ENCODE measurements at regions of chr1 and their contacts with region 1.

Region 1: GRCh38 chr1:93846211-93846991 is 32.6 kb downstream of the DNTTIP2 start:
- DNase-seq: peak; percentile 53 to 94
- H3K4me3 ChIP-seq: peak overlapping the region; percentile 73 to 91
- H3K27ac ChIP-seq: peak overlapping the region; percentile 92 to 100
- H3K4me1 ChIP-seq: peaks cover 0 to 21% of the 10 kb centered on the region in 2 donors
- H3K27me3 ChIP-seq: no peaks in the 10 kb centered on the region
- CTCF ChIP-seq: peak; percentile 14 to 37 (median 23)

Region 2: GRCh38 chr1:92831762-92832536 is 1014.5 kb before region 1 on chr1 and contains the start of gene RPL5:
- intact Hi-C with region 1: loop called (anchors 10 kb)
- DNase-seq: peak; percentile 81 to 98
- H3K4me3 ChIP-seq: peak within 1 kb of the TSS; percentile 80
- H3K27ac ChIP-seq: peak within 1 kb of the TSS; percentile 85 to 90
- H3K4me1 ChIP-seq: peaks cover 12 to 16% of the 10 kb centered on the region in 2 donors
- H3K27me3 ChIP-seq: no peaks in the 10 kb centered on the region
- CTCF ChIP-seq: peak; percentile 74 to 95 (median 92)
- total RNA-seq, gene RPL5: 617 TPM

Region 3: GRCh38 chr1:93179886-93180722 is 666.3 kb before region 1 on chr1 and contains the start of gene TMED5:
- intact Hi-C with region 1: loop called (anchors 2 kb)
- DNase-seq: peak; percentile 97 to 99
- H3K4me3 ChIP-seq: peak within 1 kb of the TSS; percentile 96
- H3K27ac ChIP-seq: peak within 1 kb of the TSS; percentile 100
- H3K4me1 ChIP-seq: peaks cover 0 to 16% of the 10 kb centered on the region in 2 donors
- H3K27me3 ChIP-seq: no peaks in the 10 kb centered on the region
- CTCF ChIP-seq: peak; percentile 2 to 22 (median 12)
- total RNA-seq, gene TMED5: 39.1 TPM

Region 4: GRCh38 chr1:93345633-93346420 is 500.6 kb before region 1 on chr1 and contains the start of gene DR1:
- intact Hi-C with region 1: loop called (anchors 2 kb)
- DNase-seq: peak; percentile 61 to 96
- H3K4me3 ChIP-seq: peak within 1 kb of the TSS; percentile 98 to 99
- H3K27ac ChIP-seq: peak within 1 kb of the TSS; percentile 95 to 98
- H3K4me1 ChIP-seq: peaks cover 0 to 9% of the 10 kb centered on the region in 2 donors
- H3K27me3 ChIP-seq: no peaks in the 10 kb centered on the region
- CTCF ChIP-seq: no peak
- total RNA-seq, gene DR1: 8.7 TPM

Region 5: GRCh38 chr1:93629099-93630059 is 217.0 kb before region 1 on chr1:
- intact Hi-C with region 1: loop called (anchors 2 kb)
- DNase-seq: no peak
- H3K4me3 ChIP-seq: no peak overlapping the region
- H3K27ac ChIP-seq: peak overlapping the region in 1 of 2 donors; percentile 44
- H3K4me1 ChIP-seq: peaks cover 0 to 19% of the 10 kb centered on the region in 2 donors
- H3K27me3 ChIP-seq: no peaks in the 10 kb centered on the region
- CTCF ChIP-seq: peak; percentile 69 to 87 (median 82)

Region 6: GRCh38 chr1:93878889-93879586 is 32.6 kb after region 1 on chr1 and contains the start of gene DNTTIP2:
- intact Hi-C with region 1: loop called (anchors 2 kb)
- DNase-seq: peak; percentile 68 to 94
- H3K4me3 ChIP-seq: peak within 1 kb of the TSS; percentile 90 to 100
- H3K27ac ChIP-seq: peak within 1 kb of the TSS; percentile 94
- H3K4me1 ChIP-seq: peaks cover 0 to 17% of the 10 kb centered on the region in 2 donors
- H3K27me3 ChIP-seq: no peaks in the 10 kb centered on the region
- CTCF ChIP-seq: no peak
- total RNA-seq, gene DNTTIP2: 27.1 TPM

Measured in ascending aorta (tissue), 2 donors.